HepG2 (cell line): ENCODE measurements at regions of chr1 and their contacts with region 1.

Region 1: GRCh38 chr1:9494929-9495758 is 44.1 kb upstream of the SLC25A33 start:
- DNase-seq: no peak
- ATAC-seq: peak; percentile 76
- H3K4me3 ChIP-seq: no peak overlapping the region; a peak in 1 of 6 replicates
- H3K27ac ChIP-seq: no peak overlapping the region
- H3K4me1 ChIP-seq: peaks cover 51% of the 10 kb centered on the region
- H3K27me3 ChIP-seq: no peaks in the 10 kb centered on the region
- CTCF ChIP-seq: peak; percentile 90
- EP300 ChIP-seq: no peak
- POLR2A ChIP-seq: no peak
- RAD21 ChIP-seq: peak; percentile 98

Region 2: GRCh38 chr1:9267352-9267686 is 227.8 kb before region 1 on chr1:
- CTCF ChIA-PET with region 1: interaction called, 17 read pairs
- POLR2A ChIA-PET with region 1: no interaction called
- in situ Hi-C with region 1: no loop called
- intact Hi-C with region 1: loop called (anchors 1 kb)
- DNase-seq: no peak
- ATAC-seq: peak; percentile 14; the same call in 2 of the 3 replicates
- H3K4me3 ChIP-seq: no peak overlapping the region
- H3K27ac ChIP-seq: no peak overlapping the region
- H3K4me1 ChIP-seq: no peaks in the 10 kb centered on the region; the same call in 1 of the 2 replicates
- H3K27me3 ChIP-seq: no peaks in the 10 kb centered on the region
- CTCF ChIP-seq: no peak
- EP300 ChIP-seq: no peak
- POLR2A ChIP-seq: no peak
- RAD21 ChIP-seq: no peak

Region 3: DNA sequence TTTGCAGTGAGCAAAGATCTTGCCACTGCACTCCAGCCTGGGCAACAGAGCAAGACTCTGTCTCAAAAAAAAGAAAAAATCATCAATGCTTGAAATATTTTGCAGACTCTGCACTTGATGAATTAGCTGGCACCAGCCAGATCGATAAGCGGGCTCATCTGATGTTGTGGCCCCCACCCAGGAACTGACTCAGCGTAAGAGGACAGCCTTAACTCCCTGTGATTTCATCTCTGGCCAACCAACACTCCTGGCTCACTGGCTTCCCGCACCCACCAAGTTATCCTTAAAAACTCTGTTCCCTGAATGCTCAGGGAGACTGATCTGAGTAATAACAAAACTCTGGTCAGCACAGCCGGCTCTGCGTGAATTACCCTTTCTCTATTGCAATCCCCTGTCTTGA is 103.5 kb before region 1 on chr1:
- CTCF ChIA-PET with region 1: no interaction called
- POLR2A ChIA-PET with region 1: no interaction called
- in situ Hi-C with region 1: no loop called
- intact Hi-C with region 1: no loop called
- DNase-seq: no peak
- ATAC-seq: no peak
- H3K4me3 ChIP-seq: no peak overlapping the region
- H3K27ac ChIP-seq: no peak overlapping the region
- H3K4me1 ChIP-seq: peaks cover 13% of the 10 kb centered on the region; the same call in 1 of the 2 replicates
- H3K27me3 ChIP-seq: peaks cover 0 to 57% of the 10 kb centered on the region in 2 experiments; a peak in 3 of 5 replicates
- CTCF ChIP-seq: no peak
- EP300 ChIP-seq: no peak
- POLR2A ChIP-seq: no peak
- RAD21 ChIP-seq: no peak

Region 4: GRCh38 chr1:9573723-9574122 is 78.6 kb after region 1 on chr1:
- CTCF ChIA-PET with region 1: interaction called, 30 read pairs
- POLR2A ChIA-PET with region 1: no interaction called
- in situ Hi-C with region 1: loop called (anchors 5 kb)
- intact Hi-C with region 1: loop called (anchors 1 kb)
- DNase-seq: no peak
- ATAC-seq: no peak
- H3K4me3 ChIP-seq: no peak overlapping the region
- H3K27ac ChIP-seq: no peak overlapping the region
- H3K4me1 ChIP-seq: peaks cover 29% of the 10 kb centered on the region
- H3K27me3 ChIP-seq: no peaks in the 10 kb centered on the region
- CTCF ChIP-seq: 0 out of 2 replicates have a peak, but pooled peaks have one; percentile 29
- EP300 ChIP-seq: no peak
- POLR2A ChIP-seq: no peak
- RAD21 ChIP-seq: no peak